Gastrocnemius medialis (tissue), 4 donors: ENCODE measurements at regions of chr4 and their contacts with region 1.

Region 1: GRCh38 chr4:128386761-128387599 is 99.4 kb upstream of the PGRMC2 start:
- DNase-seq: peak; percentile 93 to 97
- ATAC-seq: peak; percentile 92
- H3K4me3 ChIP-seq: peak overlapping the region; percentile 11 to 35 (median 32)
- H3K27ac ChIP-seq: peak overlapping the region; percentile 90 to 92 (median 91)
- H3K4me1 ChIP-seq: peaks cover 32 to 46% of the 10 kb centered on the region in 2 donors
- H3K27me3 ChIP-seq: no peaks in the 10 kb centered on the region
- CTCF ChIP-seq: no peak
- POLR2A ChIP-seq: no peak

Region 2: GRCh38 chr4:128371001-128371777 is 15.8 kb before region 1 on chr4:
- in situ Hi-C with region 1: no loop called
- intact Hi-C with region 1: loop called (anchors 2 kb)
- DNase-seq: peak in 1 of 2 donors; percentile 61
- ATAC-seq: peak; percentile 93 to 95
- H3K4me3 ChIP-seq: no peak overlapping the region
- H3K27ac ChIP-seq: peak overlapping the region; percentile 83 to 87 (median 86)
- H3K4me1 ChIP-seq: peaks cover 26% of the 10 kb centered on the region in 2 donors
- H3K27me3 ChIP-seq: no peaks in the 10 kb centered on the region
- CTCF ChIP-seq: no peak
- POLR2A ChIP-seq: no peak

Region 3: GRCh38 chr4:128590773-128591172 is 203.8 kb after region 1 on chr4:
- in situ Hi-C with region 1: no loop called
- intact Hi-C with region 1: loop called (anchors 5 kb)
- DNase-seq: peak; percentile 61 to 81
- ATAC-seq: peak; percentile 96 to 100
- H3K4me3 ChIP-seq: no peak overlapping the region
- H3K27ac ChIP-seq: peak overlapping the region; percentile 71 to 83 (median 72)
- H3K4me1 ChIP-seq: peaks cover 23% of the 10 kb centered on the region in 2 donors
- H3K27me3 ChIP-seq: no peaks in the 10 kb centered on the region
- CTCF ChIP-seq: no peak
- POLR2A ChIP-seq: no peak

Region 4: GRCh38 chr4:128630871-128631270 is 243.9 kb after region 1 on chr4:
- in situ Hi-C with region 1: no loop called
- intact Hi-C with region 1: no loop called
- DNase-seq: no peak
- ATAC-seq: no peak
- H3K4me3 ChIP-seq: no peak overlapping the region
- H3K27ac ChIP-seq: no peak overlapping the region
- H3K4me1 ChIP-seq: peaks cover 0 to 8% of the 10 kb centered on the region in 2 donors
- H3K27me3 ChIP-seq: no peaks in the 10 kb centered on the region
- CTCF ChIP-seq: no peak
- POLR2A ChIP-seq: no peak